Astrocyte of the cerebellum (primary cell): ENCODE measurements at regions of chr5 and their contacts with region 1.

Region 1: GRCh38 chr5:131252824-131253171 is 11.1 kb upstream of the CDC42SE2 start:
- DNase-seq: no peak
- H3K4me3 ChIP-seq: no peak overlapping the region
- CTCF ChIP-seq: no peak

Region 2: GRCh38 chr5:131209506-131210150 is 43.2 kb before region 1 on chr5:
- in situ Hi-C with region 1: loop called (anchors 5 kb)
- DNase-seq: no peak
- H3K4me3 ChIP-seq: no peak overlapping the region
- CTCF ChIP-seq: no peak